ENCODE measurements at regions of chr18 and their contacts with region 1.

Region 1: DNA sequence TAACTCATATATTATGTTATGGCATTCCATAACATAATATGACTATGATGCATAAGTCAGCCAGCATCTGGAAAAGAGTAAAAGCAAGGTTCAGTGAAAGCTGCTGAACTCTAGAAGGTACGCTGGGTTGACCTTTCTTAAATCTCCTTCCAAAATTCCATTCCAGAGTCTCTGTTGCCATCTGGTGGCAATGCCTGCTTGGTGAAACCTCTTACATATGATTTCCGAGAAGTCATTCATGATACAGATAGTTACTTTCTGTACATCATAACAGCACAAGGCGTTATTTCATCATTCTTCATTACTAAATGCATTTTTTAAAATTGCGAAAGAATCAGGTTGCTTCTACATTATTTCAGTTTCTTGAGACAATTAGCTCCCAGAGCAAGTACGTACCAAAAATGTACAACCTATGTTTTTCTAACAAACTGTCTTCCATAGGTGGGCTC is 7.0 kb upstream of the EPG5 start:
- DNase-seq: peak; percentile 83
- ATAC-seq: peak; percentile 90
- H3K4me3 Mint-ChIP-seq: no peak overlapping the region
- H3K27ac Mint-ChIP-seq: peak overlapping the region; percentile 89
- H3K4me1 Mint-ChIP-seq: peaks cover 11% of the 10 kb centered on the region
- H3K27me3 Mint-ChIP-seq: no peaks in the 10 kb centered on the region

Region 2: GRCh38 chr18:45621061-45621511 is 353.0 kb before region 1 on chr18:
- CTCF ChIA-PET with region 1: no interaction called
- POLR2A ChIA-PET with region 1: no interaction called
- intact Hi-C with region 1: loop called in 1 of 2 experiments (anchors 2 kb)
- DNase-seq: peak; percentile 51
- ATAC-seq: peak; percentile 47
- H3K4me3 Mint-ChIP-seq: no peak overlapping the region
- H3K27ac Mint-ChIP-seq: no peak overlapping the region
- H3K4me1 Mint-ChIP-seq: no peaks in the 10 kb centered on the region
- H3K27me3 Mint-ChIP-seq: peaks cover 8% of the 10 kb centered on the region

Region 3: GRCh38 chr18:45722899-45723298 is 251.2 kb before region 1 on chr18:
- CTCF ChIA-PET with region 1: no interaction called
- POLR2A ChIA-PET with region 1: no interaction called
- intact Hi-C with region 1: loop called in 1 of 2 experiments (anchors 1 kb)
- DNase-seq: peak; percentile 89
- ATAC-seq: peak; percentile 97
- H3K4me3 Mint-ChIP-seq: no peak overlapping the region
- H3K27ac Mint-ChIP-seq: no peak overlapping the region
- H3K4me1 Mint-ChIP-seq: no peaks in the 10 kb centered on the region
- H3K27me3 Mint-ChIP-seq: no peaks in the 10 kb centered on the region

Region 4: DNA sequence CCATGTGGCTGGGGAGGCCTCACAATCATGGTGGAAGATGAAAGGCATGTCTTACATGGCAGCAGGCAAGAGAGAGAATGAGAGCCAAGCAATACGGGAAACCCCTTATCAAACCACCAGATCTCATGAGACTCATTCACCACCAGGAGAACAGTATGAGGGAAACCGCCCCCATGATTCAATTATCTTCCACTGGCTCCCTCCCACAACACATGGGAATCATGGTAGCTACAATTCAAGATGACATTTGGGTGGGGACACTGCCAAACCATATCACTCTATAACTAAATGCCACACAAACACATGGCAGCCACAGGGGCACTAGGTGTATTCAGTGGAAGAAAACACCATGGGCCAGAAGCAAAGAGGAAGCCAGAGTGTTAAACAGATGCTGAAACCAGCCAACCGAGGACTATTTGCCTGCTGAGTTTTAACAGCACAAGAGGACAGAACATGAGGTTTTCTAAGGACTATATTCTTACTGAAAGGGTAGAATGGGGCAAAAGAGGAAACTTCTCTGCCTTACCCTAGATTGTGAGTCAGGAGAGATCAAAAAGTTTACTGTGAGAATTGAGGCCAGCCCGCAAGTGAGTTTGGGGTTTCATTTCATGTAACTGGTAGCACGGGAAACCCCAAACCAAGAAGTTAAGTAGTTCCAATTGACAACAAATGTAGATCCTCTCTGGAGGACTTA is 99.5 kb before region 1 on chr18:
- CTCF ChIA-PET with region 1: interaction called, 4 read pairs
- POLR2A ChIA-PET with region 1: no interaction called
- intact Hi-C with region 1: loop called (anchors 1 kb)
- DNase-seq: peak; percentile 84
- ATAC-seq: peak; percentile 91
- H3K4me3 Mint-ChIP-seq: peak overlapping the region; percentile 41
- H3K27ac Mint-ChIP-seq: peak overlapping the region; percentile 96
- H3K4me1 Mint-ChIP-seq: peaks cover 34% of the 10 kb centered on the region
- H3K27me3 Mint-ChIP-seq: no peaks in the 10 kb centered on the region

Region 5: GRCh38 chr18:45910405-45911023 is 63.6 kb before region 1 on chr18:
- CTCF ChIA-PET with region 1: no interaction called
- POLR2A ChIA-PET with region 1: no interaction called
- intact Hi-C with region 1: loop called in 1 of 2 experiments (anchors 2 kb)
- DNase-seq: peak; percentile 81
- ATAC-seq: peak; percentile 89
- H3K4me3 Mint-ChIP-seq: no peak overlapping the region
- H3K27ac Mint-ChIP-seq: no peak overlapping the region
- H3K4me1 Mint-ChIP-seq: no peaks in the 10 kb centered on the region
- H3K27me3 Mint-ChIP-seq: no peaks in the 10 kb centered on the region

Region 6: DNA sequence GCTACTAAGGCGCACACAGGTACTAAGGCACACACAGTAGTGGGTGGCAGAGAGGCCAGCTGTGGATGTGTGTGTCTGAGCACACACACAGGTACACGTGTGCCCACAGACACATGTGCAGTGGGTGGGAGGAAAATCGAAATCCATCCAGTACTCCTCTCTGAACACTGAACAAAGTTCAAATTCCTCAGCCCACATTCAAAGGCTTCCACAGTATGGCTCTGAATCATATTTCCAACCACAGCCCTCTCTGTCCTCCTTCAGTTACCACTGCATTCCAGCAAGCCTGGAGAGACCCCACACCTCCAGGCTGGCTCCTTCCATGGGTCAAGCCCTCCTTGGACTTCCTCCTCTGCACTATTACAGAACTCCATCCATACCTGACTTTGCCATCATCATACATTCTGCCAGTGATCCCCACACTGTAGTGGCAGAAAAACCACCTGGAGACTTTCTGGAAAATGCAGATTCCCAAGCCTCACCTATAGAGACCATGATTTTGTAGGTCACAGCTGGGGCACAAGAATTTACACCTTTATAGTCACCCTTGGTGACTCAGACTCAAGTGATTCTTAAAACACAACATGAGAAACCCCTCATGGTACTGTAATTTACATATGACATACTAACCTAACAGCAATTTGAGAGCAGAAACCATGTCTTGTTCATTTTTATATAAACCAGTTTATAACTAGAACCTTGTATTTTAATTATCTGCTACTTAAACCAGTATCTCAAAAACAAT is 38.3 kb before region 1 on chr18:
- CTCF ChIA-PET with region 1: interaction called, 4 read pairs
- POLR2A ChIA-PET with region 1: no interaction called
- intact Hi-C with region 1: loop called in 1 of 2 experiments (anchors 5 kb)
- DNase-seq: no peak
- ATAC-seq: peak; percentile 67
- H3K4me3 Mint-ChIP-seq: no peak overlapping the region
- H3K27ac Mint-ChIP-seq: no peak overlapping the region
- H3K4me1 Mint-ChIP-seq: peaks cover 31% of the 10 kb centered on the region
- H3K27me3 Mint-ChIP-seq: no peaks in the 10 kb centered on the region

Region 7: DNA sequence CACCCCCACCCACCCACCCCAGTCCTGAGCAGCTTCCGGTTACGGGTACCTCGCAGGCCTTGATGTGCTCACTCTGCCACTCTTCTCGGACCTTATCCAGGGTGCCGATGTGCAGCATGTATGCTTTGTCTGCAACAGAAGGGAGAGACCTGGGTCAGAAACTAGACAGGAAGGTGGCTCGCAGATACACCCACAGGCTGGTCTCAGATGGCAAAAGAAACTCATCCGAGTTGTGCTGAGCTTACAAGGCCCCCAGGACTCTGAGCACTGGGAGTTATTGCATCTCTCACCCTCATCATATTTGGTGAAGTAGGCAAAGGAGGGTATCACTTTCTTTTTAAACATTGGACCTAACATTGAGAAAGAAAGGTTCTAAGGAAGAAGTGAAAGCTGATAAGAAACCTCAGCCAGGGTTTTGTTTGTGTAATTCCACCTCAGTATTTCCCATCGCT is 23.6 kb after region 1 on chr18:
- CTCF ChIA-PET with region 1: interaction called, 5 read pairs
- POLR2A ChIA-PET with region 1: no interaction called
- intact Hi-C with region 1: loop called in 1 of 2 experiments (anchors 1 kb)
- DNase-seq: peak; percentile 57
- ATAC-seq: peak; percentile 91
- H3K4me3 Mint-ChIP-seq: peak overlapping the region; percentile 64
- H3K27ac Mint-ChIP-seq: peak overlapping the region; percentile 79
- H3K4me1 Mint-ChIP-seq: peaks cover 37% of the 10 kb centered on the region
- H3K27me3 Mint-ChIP-seq: no peaks in the 10 kb centered on the region

Region 8: DNA sequence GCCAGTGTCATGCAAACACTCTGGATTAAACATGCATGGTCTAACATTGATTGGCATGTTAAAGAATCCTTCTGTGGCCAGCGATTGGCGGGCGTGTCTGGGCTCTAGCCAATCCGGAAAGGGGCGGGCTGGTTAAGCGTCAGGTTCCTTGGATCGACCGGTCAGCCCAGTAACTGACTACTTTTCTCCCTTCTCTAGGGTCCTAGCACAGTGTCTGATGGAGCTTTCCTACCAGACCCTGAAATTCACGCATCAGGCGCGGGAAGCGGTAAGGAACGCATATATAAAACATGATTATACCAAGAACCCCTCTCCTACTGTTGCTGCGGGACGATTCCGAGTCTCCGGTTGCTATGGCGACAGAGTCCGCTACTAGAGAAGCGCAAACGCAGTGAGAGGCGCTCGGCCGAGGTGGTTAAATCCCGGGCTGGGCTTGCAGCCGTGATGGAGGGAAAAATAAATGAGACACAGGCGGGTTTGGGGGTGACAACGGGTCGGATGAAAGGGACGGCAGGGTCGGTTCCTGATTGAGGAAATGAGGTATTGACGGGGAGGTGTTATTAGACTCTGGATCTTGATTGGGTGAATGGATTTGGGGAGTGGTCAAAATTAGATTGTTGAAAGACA is 972.7 kb after region 1 on chr18:
- CTCF ChIA-PET with region 1: no interaction called
- POLR2A ChIA-PET with region 1: no interaction called
- intact Hi-C with region 1: no loop called
- DNase-seq: peak; percentile 78
- ATAC-seq: peak; percentile 99
- H3K4me3 Mint-ChIP-seq: no peak overlapping the region
- H3K27ac Mint-ChIP-seq: no peak overlapping the region
- H3K4me1 Mint-ChIP-seq: no peaks in the 10 kb centered on the region
- H3K27me3 Mint-ChIP-seq: peaks cover 8% of the 10 kb centered on the region